ENCODE measurements at regions of chr5 and their contacts with region 1.

Region 1: DNA sequence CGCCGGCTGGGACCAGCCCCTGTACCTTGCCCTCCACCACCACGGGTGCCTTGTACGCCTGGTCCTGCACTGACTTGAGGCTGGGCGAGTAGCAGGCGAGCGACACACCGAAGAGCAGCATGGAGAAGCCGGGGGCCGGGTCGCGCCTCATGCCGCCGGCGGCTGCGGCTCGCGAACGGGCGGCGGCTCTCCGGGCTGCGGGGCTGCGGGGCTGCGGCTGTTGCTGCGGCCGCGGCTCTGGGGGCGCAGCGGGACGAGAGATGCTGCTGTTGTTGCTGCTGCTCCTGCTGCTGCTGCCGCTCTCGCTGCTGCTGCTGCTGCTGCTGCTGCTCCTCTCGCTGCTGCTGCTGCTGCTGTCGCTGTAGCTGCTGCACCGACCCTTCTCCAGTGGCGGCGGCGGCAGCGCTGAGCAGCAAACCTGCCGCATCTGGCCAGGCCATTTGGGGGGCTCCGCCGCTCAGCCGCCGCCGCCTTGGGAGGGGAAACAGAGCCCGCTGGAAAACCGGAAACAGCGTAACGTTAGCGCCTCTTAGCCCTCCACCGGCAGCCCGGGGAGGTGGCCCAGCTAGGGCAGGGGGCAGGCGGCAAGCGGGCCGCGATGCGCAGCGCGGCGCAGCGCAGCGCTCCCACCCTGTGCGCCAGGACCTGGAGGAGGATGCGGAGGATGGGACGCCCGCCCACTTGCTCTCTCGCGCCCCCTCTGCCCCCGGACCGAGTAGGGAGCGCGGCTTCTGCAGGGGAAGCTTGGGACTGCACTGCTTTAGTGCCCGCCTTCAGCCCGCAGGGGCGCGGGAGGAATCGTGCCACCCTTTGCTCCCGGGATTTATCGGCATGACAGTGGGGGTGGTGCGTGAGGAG is at the start of gene NRG2:
- H3K4me3 ChIP-seq: peak within 1 kb of the TSS; percentile 70
- H3K27ac ChIP-seq: peak within 1 kb of the TSS; percentile 79; the same call in 1 of the 2 replicates
- H3K4me1 ChIP-seq: peaks cover 19% of the 10 kb centered on the region
- CTCF ChIP-seq: peak; percentile 100

Region 2: DNA sequence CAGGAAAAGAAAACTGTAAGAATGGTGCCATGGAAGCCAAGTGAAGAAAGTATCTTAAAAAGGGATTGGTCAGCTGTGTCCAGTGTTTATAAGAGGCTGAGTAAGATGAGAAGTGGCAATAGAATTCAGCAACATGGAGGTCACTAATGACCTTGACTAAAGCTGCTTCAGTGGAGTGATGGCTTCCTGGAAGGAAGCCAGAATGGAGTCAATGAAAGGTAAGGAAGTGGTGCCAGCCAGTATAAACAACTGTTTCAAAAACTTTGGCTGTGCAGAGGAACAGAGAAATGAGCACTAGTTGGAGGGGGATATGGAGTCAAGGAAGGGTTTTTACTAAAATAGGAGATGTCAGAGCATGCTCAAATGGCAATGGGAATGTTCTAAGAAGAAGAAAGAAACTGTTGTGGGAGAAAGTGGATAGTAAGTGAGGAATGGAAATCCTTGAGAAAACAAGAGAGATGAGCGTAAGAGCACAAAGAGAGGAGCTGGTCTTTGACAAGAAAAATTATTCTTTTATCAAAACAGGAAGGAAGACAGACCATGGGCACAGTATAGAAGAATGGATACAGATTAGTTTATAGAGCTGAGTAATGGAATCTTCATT is 11.3 kb after region 1 on chr5:
- CTCF ChIA-PET with region 1: interaction called, 14 read pairs
- POLR2A ChIA-PET with region 1: interaction called, 3 read pairs
- H3K4me3 ChIP-seq: no peak overlapping the region
- H3K27ac ChIP-seq: no peak overlapping the region
- H3K4me1 ChIP-seq: peaks cover 9% of the 10 kb centered on the region
- CTCF ChIP-seq: no peak

Measured in HEK293 (cell line).